ENCODE measurements at regions of chr7 and their contacts with region 1.

Region 1: GRCh38 chr7:153951316-153951715 is 100.9 kb upstream of the DPP6 start:
- DNase-seq: no peak

Region 2: DNA sequence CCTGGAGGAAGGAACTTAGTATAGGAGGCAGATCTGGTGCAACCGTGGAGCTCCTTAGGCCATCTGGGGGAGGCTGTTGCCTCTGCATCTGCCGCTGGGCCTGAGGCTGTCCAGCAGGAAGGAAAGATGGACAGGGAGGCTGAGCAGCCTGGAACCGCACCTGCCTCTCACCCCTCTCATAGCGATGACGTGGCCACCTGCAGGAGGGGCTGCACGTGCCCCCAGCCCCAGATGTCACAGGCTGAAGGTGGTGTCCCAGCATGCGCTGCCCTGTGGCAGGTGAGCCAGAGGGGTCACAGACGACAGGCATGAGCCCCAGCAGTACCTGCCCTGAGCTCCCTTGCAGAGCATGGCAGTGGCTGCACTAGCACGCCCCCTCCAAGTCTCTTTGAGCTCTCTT is 907.9 kb before region 1 on chr7:
- intact Hi-C with region 1: no loop called
- DNase-seq: no peak

Region 3: DNA sequence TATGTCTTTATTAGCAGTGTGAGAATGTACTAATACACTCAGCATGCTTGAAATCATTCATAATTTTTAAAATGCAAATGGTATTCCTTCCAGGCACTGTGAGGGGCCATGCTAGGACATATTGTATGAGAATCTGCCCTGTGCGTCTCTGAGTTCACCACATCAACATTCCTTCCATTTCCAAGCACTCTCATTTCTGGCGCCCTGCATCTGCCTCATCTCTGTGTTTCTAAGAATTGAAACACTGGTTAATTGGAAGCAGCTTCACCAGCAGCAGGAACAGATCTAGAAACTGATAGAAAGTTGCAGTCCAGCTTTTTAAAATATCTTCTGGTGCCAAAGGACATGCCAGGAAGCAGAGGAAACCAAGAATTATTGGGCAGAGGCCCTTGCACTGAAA is 455.1 kb before region 1 on chr7:
- intact Hi-C with region 1: loop called in 1 of 2 experiments (anchors 5 kb)
- DNase-seq: no peak

Region 4: GRCh38 chr7:153808117-153808516 is 143.2 kb before region 1 on chr7:
- intact Hi-C with region 1: no loop called
- DNase-seq: no peak

Region 5: GRCh38 chr7:153859239-153859638 is 92.1 kb before region 1 on chr7:
- intact Hi-C with region 1: no loop called
- DNase-seq: no peak

Measured in posterior vena cava (tissue), 2 donors.